Heart left ventricle (tissue), 16 donors: ENCODE measurements at regions of chr7 and their contacts with region 1.

Region 1: GRCh38 chr7:1569833-1570633 is at the start of gene PSMG3:
- DNase-seq: peak; percentile 92 to 96 (median 93)
- ATAC-seq: peak; percentile 92 to 98 (median 96)
- H3K4me3 ChIP-seq: peak within 1 kb of the TSS; percentile 49 to 98 (median 81)
- H3K27ac ChIP-seq: peak within 1 kb of the TSS; percentile 82 to 99 (median 94)
- H3K4me1 ChIP-seq: peaks cover 3 to 42% (median 26%) of the 10 kb centered on the region in 12 donors
- H3K27me3 ChIP-seq: no peaks in the 10 kb centered on the region
- CTCF ChIP-seq: peak in 8 of 12 donors; percentile 6 to 55 (median 30)
- POLR2A ChIP-seq: peak in 1 of 2 donors; percentile 81
- total RNA-seq, gene PSMG3: 7.3 to 27.6 (median 13.3) TPM

Region 2: DNA sequence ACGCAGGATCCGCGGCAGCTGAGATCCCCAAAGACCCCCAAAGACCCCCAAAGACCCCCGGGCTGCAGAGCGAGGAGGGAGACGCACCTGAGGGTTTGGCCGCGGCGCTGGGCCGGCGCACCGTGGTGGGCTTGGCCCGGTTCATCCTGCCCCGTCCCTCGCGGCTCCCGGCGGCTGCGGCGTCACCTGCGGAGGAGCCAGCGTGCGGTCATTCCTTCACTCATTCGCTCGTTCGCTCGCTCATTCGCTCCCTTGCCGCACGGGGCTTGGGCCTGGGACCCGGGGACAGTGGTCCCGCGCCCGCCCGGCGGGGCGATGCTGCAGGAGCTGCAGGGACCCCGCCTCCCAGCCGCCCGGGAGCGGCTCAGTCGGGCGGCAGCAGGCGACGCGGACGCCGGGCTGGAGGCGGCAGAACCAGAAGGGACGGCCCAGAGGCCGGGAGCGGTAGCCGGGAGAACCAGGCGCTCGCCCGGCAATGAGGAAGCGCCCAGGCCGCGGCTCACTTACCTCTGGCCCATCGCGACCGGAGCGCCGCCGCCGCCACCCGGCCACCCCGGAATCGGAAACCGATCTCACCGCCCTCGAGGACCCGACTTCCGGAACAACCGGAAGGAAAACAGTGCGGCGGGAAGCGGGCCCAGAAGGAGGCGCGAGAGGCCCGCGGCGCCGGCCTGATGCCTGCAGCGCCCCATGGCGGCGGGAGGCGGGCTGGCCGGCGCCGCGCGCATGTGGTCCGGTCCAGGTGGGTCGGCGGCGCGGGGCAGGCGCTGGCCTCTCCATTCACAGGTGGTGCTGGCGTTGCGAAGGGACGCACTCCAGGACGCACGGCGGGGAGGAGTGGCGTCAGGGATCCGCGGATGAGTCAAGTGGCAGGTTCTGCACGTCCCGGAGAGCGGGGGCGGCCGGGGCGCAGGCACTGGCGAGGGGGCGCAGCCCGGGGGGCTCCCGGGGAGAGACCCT is 65.9 kb before region 1 on chr7 and contains the start of gene INTS1:
- intact Hi-C with region 1: loop called in 1 of 10 experiments (anchors 2 kb)
- DNase-seq: peak; percentile 92 to 95 (median 94)
- ATAC-seq: peak; percentile 72 to 92 (median 88)
- H3K4me3 ChIP-seq: peak within 1 kb of the TSS; percentile 82 to 100 (median 100)
- H3K27ac ChIP-seq: peak within 1 kb of the TSS in 11 of 12 donors; percentile 56 to 90 (median 78)
- H3K4me1 ChIP-seq: peaks cover 5 to 39% (median 24%) of the 10 kb centered on the region in 12 donors
- H3K27me3 ChIP-seq: no peaks in the 10 kb centered on the region
- CTCF ChIP-seq: peak; percentile 75 to 99 (median 92)
- POLR2A ChIP-seq: peak in 1 of 2 donors; percentile 83
- total RNA-seq, gene INTS1: 35.5 to 67.4 (median 45.3) TPM

Region 3: GRCh38 chr7:1532483-1533424 is 37.3 kb before region 1 on chr7:
- intact Hi-C with region 1: loop called in 2 of 10 experiments (anchors 5 kb)
- DNase-seq: peak; percentile 82 to 87 (median 83)
- ATAC-seq: peak; percentile 18 to 55 (median 36)
- H3K4me3 ChIP-seq: peak overlapping the region; percentile 39 to 94 (median 66)
- H3K27ac ChIP-seq: peak overlapping the region; percentile 90 to 100 (median 96)
- H3K4me1 ChIP-seq: peaks cover 18 to 69% (median 52%) of the 10 kb centered on the region in 12 donors
- H3K27me3 ChIP-seq: no peaks in the 10 kb centered on the region
- CTCF ChIP-seq: no peak
- POLR2A ChIP-seq: peak in 1 of 2 donors; percentile 77

Region 4: DNA sequence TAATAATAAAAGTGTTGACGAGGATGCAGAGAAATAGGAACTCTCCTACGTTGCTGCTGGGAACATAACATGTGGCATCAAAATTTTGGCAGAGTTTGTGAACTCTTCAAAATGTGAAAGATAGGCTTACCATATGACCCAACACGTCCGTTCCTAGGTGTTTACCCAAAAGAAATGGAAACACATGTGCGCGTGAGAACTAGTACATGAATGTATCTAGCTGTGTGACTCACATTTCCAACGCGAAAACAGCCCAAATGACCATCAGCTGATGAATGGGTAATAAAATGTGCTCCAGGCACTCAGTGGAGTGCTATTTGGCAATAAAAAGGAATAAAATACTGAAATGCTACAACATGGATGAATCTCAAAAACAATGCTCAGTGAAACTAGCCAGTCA is 89.7 kb after region 1 on chr7:
- intact Hi-C with region 1: loop called in 3 of 10 experiments (anchors 10 kb)
- DNase-seq: no peak
- ATAC-seq: no peak
- H3K4me3 ChIP-seq: no peak overlapping the region
- H3K27ac ChIP-seq: no peak overlapping the region
- H3K4me1 ChIP-seq: peaks cover 0 to 10% (median 8%) of the 10 kb centered on the region in 12 donors
- H3K27me3 ChIP-seq: peaks cover 4 to 41% (median 9%) of the 10 kb centered on the region in 9 donors
- CTCF ChIP-seq: no peak
- POLR2A ChIP-seq: no peak

Region 5: GRCh38 chr7:1664711-1665548 is 94.9 kb after region 1 on chr7:
- intact Hi-C with region 1: loop called in 2 of 10 experiments (anchors 10 kb)
- DNase-seq: peak; percentile 55 to 81 (median 64)
- ATAC-seq: peak in 3 of 4 donors; percentile 18 to 56 (median 41)
- H3K4me3 ChIP-seq: peak overlapping the region; percentile 49 to 86 (median 69)
- H3K27ac ChIP-seq: peak overlapping the region; percentile 63 to 85 (median 75)
- H3K4me1 ChIP-seq: peaks cover 0 to 61% (median 41%) of the 10 kb centered on the region in 12 donors
- H3K27me3 ChIP-seq: peaks cover 6 to 74% (median 12%) of the 10 kb centered on the region in 9 donors
- CTCF ChIP-seq: peak; percentile 54 to 88 (median 77)
- POLR2A ChIP-seq: no peak

Region 6: DNA sequence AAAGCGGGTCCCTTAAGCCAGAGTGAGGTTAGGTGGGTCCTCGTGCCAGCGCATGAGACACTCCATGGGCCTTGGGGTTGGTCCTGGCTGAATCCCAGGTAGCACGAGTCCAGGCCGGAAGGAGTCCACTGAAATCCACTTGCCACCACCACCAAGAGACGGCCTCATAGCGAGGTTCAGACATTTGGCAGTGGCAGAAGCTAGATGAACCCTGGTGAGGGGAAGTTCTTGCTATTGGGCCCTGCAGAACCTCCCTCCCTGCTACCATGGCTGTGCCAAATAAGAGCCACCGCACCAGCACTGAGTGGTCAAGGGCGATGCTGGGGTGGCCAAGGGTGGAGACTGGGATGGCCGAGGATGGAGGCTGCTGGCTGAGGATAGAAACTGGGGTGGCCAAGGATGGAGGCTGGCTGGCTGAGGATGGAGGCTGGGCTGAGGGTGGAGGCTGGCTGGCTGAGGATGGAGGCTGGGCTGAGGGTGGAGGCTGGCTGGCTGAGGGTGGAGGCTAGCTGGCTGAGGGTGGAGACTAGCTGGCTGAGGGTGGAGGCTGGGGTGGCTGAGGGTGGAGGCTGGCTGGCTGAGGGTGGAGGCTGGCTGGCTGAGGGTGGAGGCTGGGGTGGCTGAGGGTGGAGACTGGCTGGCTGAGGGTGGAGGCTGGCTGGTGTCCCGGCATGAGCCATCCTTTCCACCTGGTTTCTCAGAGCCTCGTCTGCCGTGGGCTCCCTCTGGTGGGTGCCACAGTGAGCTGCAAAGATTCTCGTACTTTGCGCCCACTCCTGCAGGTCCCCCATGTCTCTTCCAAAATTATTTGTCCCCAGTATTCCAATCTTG is 188.2 kb after region 1 on chr7:
- intact Hi-C with region 1: loop called in 2 of 10 experiments (anchors 5 to 10 kb)
- DNase-seq: peak in 3 of 5 donors; percentile 53 to 75 (median 63)
- ATAC-seq: peak; percentile 44 to 86 (median 68)
- H3K4me3 ChIP-seq: no peak overlapping the region
- H3K27ac ChIP-seq: peak overlapping the region in 4 of 12 donors; percentile 35 to 79 (median 72)
- H3K4me1 ChIP-seq: peaks cover 0 to 12% (median 0%) of the 10 kb centered on the region in 12 donors
- H3K27me3 ChIP-seq: peaks cover 0 to 5% (median 0%) of the 10 kb centered on the region in 9 donors
- CTCF ChIP-seq: peak; percentile 23 to 59 (median 43)
- POLR2A ChIP-seq: no peak

Region 7: GRCh38 chr7:2214636-2215035 is 644.6 kb after region 1 on chr7:
- intact Hi-C with region 1: loop called in 4 of 10 experiments (anchors 5 to 10 kb)
- DNase-seq: peak in 2 of 5 donors; percentile 27 to 47
- ATAC-seq: peak in 2 of 4 donors; percentile 6 to 30
- H3K4me3 ChIP-seq: no peak overlapping the region
- H3K27ac ChIP-seq: peak overlapping the region in 10 of 12 donors; percentile 48 to 86 (median 64)
- H3K4me1 ChIP-seq: peaks cover 0 to 24% (median 7%) of the 10 kb centered on the region in 12 donors
- H3K27me3 ChIP-seq: no peaks in the 10 kb centered on the region
- CTCF ChIP-seq: no peak
- POLR2A ChIP-seq: no peak